Colonic mucosa (tissue), 4 donors: ENCODE measurements at regions of chr13 and their contacts with region 1.

Region 1: GRCh38 chr13:26498656-26499591 is 58.6 kb upstream of the WASF3 start:
- DNase-seq: no peak
- H3K4me3 ChIP-seq: no peak overlapping the region
- H3K27ac ChIP-seq: no peak overlapping the region
- H3K4me1 ChIP-seq: no peaks in the 10 kb centered on the region
- H3K27me3 ChIP-seq: no peaks in the 10 kb centered on the region
- CTCF ChIP-seq: no peak

Region 2: GRCh38 chr13:26011996-26012821 is 486.7 kb before region 1 on chr13:
- intact Hi-C with region 1: no loop called
- DNase-seq: no peak
- H3K4me3 ChIP-seq: no peak overlapping the region
- H3K27ac ChIP-seq: no peak overlapping the region
- H3K4me1 ChIP-seq: no peaks in the 10 kb centered on the region
- H3K27me3 ChIP-seq: no peaks in the 10 kb centered on the region
- CTCF ChIP-seq: no peak

Region 3: GRCh38 chr13:26184791-26185250 is 314.1 kb before region 1 on chr13:
- intact Hi-C with region 1: loop called (anchors 1 kb)
- DNase-seq: peak; percentile 77
- H3K4me3 ChIP-seq: no peak overlapping the region
- H3K27ac ChIP-seq: no peak overlapping the region
- H3K4me1 ChIP-seq: peaks cover 2% of the 10 kb centered on the region
- H3K27me3 ChIP-seq: no peaks in the 10 kb centered on the region
- CTCF ChIP-seq: peak; percentile 88

Region 4: DNA sequence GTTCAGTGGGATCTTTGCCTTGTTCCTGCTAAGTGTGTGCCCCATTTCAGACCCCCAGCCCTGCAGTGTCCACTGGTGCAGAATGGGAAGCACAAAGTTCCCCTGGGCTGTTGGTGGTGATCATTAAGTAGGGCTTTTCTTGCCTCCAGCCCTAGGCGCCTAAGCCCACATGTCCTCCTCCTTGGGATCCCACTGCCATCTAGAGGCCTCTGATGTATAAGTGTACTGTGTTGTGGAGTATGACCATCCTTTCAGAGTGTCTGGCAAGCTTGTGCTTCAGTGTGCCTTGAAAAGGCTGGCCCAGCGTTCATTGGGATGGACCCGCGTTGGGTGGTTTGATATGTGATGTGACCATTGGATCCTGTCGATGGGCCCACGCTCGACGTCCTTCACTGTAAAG is 129.8 kb after region 1 on chr13:
- intact Hi-C with region 1: loop called (anchors 10 kb)
- DNase-seq: peak; percentile 30
- H3K4me3 ChIP-seq: no peak overlapping the region
- H3K27ac ChIP-seq: no peak overlapping the region
- H3K4me1 ChIP-seq: no peaks in the 10 kb centered on the region
- H3K27me3 ChIP-seq: no peaks in the 10 kb centered on the region
- CTCF ChIP-seq: no peak

Region 5: GRCh38 chr13:26929971-26930730 is 431.2 kb after region 1 on chr13:
- intact Hi-C with region 1: no loop called
- DNase-seq: peak; percentile 73
- H3K4me3 ChIP-seq: no peak overlapping the region
- H3K27ac ChIP-seq: no peak overlapping the region
- H3K4me1 ChIP-seq: no peaks in the 10 kb centered on the region
- H3K27me3 ChIP-seq: no peaks in the 10 kb centered on the region
- CTCF ChIP-seq: peak; percentile 97